Ovary (tissue), 10 donors: ENCODE measurements at regions of chr1 and their contacts with region 1.

Region 1: GRCh38 chr1:8314346-8315280 is 3.3 kb upstream of the SLC45A1 start:
- DNase-seq: peak; percentile 77 to 88 (median 86)
- H3K4me3 ChIP-seq: no peak overlapping the region
- H3K27ac ChIP-seq: no peak overlapping the region
- H3K4me1 ChIP-seq: peaks cover 12% of the 10 kb centered on the region
- H3K27me3 ChIP-seq: no peaks in the 10 kb centered on the region
- CTCF ChIP-seq: peak; percentile 65 to 93 (median 88)
- EP300 ChIP-seq: no peak
- POLR2A ChIP-seq: peak; percentile 16

Region 2: DNA sequence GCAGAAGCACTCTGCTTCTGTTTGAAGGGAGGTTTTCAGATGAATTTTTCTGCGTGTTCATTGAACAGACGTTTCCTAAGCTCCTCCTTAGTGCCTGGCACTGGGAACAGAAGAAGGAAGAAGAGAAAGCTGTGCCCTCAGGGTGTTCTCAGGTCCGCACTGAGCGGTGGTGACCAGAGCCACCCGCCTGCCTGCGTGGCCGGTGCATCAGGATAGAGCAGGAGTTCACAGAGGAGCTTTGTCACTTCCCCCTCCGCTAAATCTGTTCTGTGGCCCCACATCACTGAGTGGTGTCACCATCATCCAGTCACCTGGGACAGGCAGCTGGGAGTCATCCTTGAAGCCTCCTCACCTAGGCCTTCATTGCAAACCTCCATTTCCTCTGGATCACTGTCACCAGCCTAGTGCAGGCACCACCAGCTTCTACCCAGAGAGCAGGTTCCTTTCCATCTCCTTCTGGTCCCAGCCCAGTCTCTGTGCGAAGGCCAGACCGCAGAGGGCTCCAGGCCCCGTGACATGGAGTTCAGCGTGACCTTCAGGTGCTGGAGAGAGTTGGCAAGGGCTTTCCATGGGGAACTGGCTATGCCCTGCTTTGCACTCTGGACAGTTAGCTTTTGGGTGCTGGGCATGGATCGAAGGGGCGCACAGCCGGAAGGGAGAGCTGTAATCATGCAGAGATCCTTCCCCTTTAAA is 331.4 kb before region 1 on chr1:
- intact Hi-C with region 1: loop called (anchors 2 to 5 kb)
- DNase-seq: no peak
- H3K4me3 ChIP-seq: no peak overlapping the region
- H3K27ac ChIP-seq: no peak overlapping the region
- H3K4me1 ChIP-seq: peaks cover 1% of the 10 kb centered on the region
- H3K27me3 ChIP-seq: no peaks in the 10 kb centered on the region
- CTCF ChIP-seq: no peak
- EP300 ChIP-seq: no peak
- POLR2A ChIP-seq: no peak

Region 3: GRCh38 chr1:8015036-8015808 is 299.4 kb before region 1 on chr1:
- intact Hi-C with region 1: loop called in 3 of 4 experiments (anchors 10 kb)
- DNase-seq: peak in 1 of 5 donors; percentile 52
- H3K4me3 ChIP-seq: no peak overlapping the region
- H3K27ac ChIP-seq: peak overlapping the region in 1 of 2 donors; percentile 46
- H3K4me1 ChIP-seq: peaks cover 16% of the 10 kb centered on the region
- H3K27me3 ChIP-seq: no peaks in the 10 kb centered on the region
- CTCF ChIP-seq: peak in 2 of 3 donors; percentile 55 to 62
- EP300 ChIP-seq: no peak
- POLR2A ChIP-seq: no peak

Region 4: DNA sequence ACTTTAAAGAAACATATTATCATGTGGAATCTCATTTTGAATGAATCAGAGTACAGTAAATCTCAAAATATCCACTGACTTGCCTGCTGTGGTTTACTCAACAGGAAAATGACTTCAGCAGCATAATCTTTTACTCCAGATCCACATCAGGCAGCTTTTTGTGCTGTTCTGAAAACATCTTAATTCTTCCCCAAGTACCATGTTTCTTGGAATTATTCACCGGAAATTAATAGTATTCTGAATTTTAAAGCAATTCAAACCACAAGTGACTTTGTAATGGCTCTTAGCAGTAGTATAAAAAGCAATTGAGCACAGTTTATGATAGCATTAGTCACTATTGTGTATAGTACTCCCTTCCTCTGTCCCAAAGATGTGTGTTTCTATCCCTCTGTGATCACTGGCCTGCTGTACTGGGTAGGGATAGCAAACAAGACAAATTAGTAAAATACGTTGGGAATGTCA is 224.3 kb before region 1 on chr1:
- intact Hi-C with region 1: no loop called
- DNase-seq: no peak
- H3K4me3 ChIP-seq: no peak overlapping the region
- H3K27ac ChIP-seq: no peak overlapping the region
- H3K4me1 ChIP-seq: no peaks in the 10 kb centered on the region
- H3K27me3 ChIP-seq: no peaks in the 10 kb centered on the region
- CTCF ChIP-seq: no peak
- EP300 ChIP-seq: no peak
- POLR2A ChIP-seq: no peak

Region 5: GRCh38 chr1:8142955-8143629 is 171.5 kb before region 1 on chr1:
- intact Hi-C with region 1: loop called in 1 of 4 experiments (anchors 10 kb)
- DNase-seq: no peak
- H3K4me3 ChIP-seq: no peak overlapping the region
- H3K27ac ChIP-seq: no peak overlapping the region
- H3K4me1 ChIP-seq: no peaks in the 10 kb centered on the region
- H3K27me3 ChIP-seq: no peaks in the 10 kb centered on the region
- CTCF ChIP-seq: no peak
- EP300 ChIP-seq: no peak
- POLR2A ChIP-seq: no peak

Region 6: GRCh38 chr1:8238851-8239305 is 75.7 kb before region 1 on chr1:
- intact Hi-C with region 1: loop called in 1 of 4 experiments (anchors 10 kb)
- DNase-seq: peak; percentile 36 to 72 (median 52)
- H3K4me3 ChIP-seq: no peak overlapping the region
- H3K27ac ChIP-seq: no peak overlapping the region
- H3K4me1 ChIP-seq: peaks cover 7% of the 10 kb centered on the region
- H3K27me3 ChIP-seq: no peaks in the 10 kb centered on the region
- CTCF ChIP-seq: no peak
- EP300 ChIP-seq: no peak
- POLR2A ChIP-seq: no peak